ENCODE measurements at regions of chr12 and their contacts with region 1.

Region 1: DNA sequence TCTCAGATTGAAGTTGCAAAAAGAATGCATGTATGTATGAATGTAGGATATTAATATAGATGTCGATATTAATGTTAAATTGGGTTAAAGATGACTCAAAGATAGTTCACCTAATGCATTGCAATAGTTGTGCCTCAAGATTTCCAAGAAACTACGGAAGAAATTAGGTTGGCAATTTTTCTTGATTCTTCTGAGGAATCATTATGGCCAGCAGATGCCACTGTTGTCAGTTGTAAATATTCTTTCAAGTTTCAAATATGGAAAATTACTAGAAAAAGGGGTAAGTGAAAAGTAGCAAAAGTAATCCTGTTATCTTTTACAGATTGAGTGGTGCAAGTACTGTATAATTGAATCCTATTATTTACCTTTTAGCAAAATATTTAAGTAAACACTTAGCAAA is 202.1 kb downstream of the ADAMTS20 start:
- DNase-seq: peak; percentile 10
- ATAC-seq: no peak
- H3K4me3 ChIP-seq: no peak overlapping the region
- H3K27ac ChIP-seq: no peak overlapping the region
- H3K4me1 ChIP-seq: no peaks in the 10 kb centered on the region
- H3K27me3 ChIP-seq: no peaks in the 10 kb centered on the region
- CTCF ChIP-seq: peak; percentile 32 to 59 (median 44); a peak in 5 of 6 replicates
- POLR2A ChIP-seq: no peak
- RAD21 ChIP-seq: peak; percentile 66

Region 2: GRCh38 chr12:43099691-43100163 is 250.1 kb before region 1 on chr12:
- CTCF ChIA-PET with region 1: no interaction called
- POLR2A ChIA-PET with region 1: no interaction called
- RAD21 ChIA-PET with region 1: no interaction called
- intact Hi-C with region 1: no loop called
- DNase-seq: no peak
- ATAC-seq: no peak
- H3K4me3 ChIP-seq: no peak overlapping the region
- H3K27ac ChIP-seq: no peak overlapping the region
- H3K4me1 ChIP-seq: no peaks in the 10 kb centered on the region
- H3K27me3 ChIP-seq: no peaks in the 10 kb centered on the region
- CTCF ChIP-seq: no peak
- POLR2A ChIP-seq: no peak
- RAD21 ChIP-seq: no peak

Region 3: GRCh38 chr12:43179486-43179885 is 170.4 kb before region 1 on chr12:
- CTCF ChIA-PET with region 1: no interaction called
- POLR2A ChIA-PET with region 1: no interaction called
- RAD21 ChIA-PET with region 1: no interaction called
- intact Hi-C with region 1: no loop called
- DNase-seq: no peak
- ATAC-seq: no peak
- H3K4me3 ChIP-seq: no peak overlapping the region
- H3K27ac ChIP-seq: no peak overlapping the region
- H3K4me1 ChIP-seq: no peaks in the 10 kb centered on the region
- H3K27me3 ChIP-seq: no peaks in the 10 kb centered on the region
- CTCF ChIP-seq: no peak
- POLR2A ChIP-seq: no peak
- RAD21 ChIP-seq: no peak

Region 4: GRCh38 chr12:43501703-43502102 is 151.8 kb after region 1 on chr12:
- CTCF ChIA-PET with region 1: no interaction called
- POLR2A ChIA-PET with region 1: no interaction called
- RAD21 ChIA-PET with region 1: no interaction called
- intact Hi-C with region 1: loop called (anchors 5 kb)
- DNase-seq: peak; percentile 36
- ATAC-seq: no peak
- H3K4me3 ChIP-seq: no peak overlapping the region
- H3K27ac ChIP-seq: no peak overlapping the region
- H3K4me1 ChIP-seq: no peaks in the 10 kb centered on the region
- H3K27me3 ChIP-seq: no peaks in the 10 kb centered on the region
- CTCF ChIP-seq: peak; percentile 61 to 75 (median 65)
- POLR2A ChIP-seq: no peak
- RAD21 ChIP-seq: peak; percentile 72

Region 5: GRCh38 chr12:43728117-43728516 is 378.3 kb after region 1 on chr12:
- CTCF ChIA-PET with region 1: no interaction called
- POLR2A ChIA-PET with region 1: no interaction called
- RAD21 ChIA-PET with region 1: no interaction called
- intact Hi-C with region 1: loop called (anchors 5 kb)
- DNase-seq: no peak
- ATAC-seq: no peak
- H3K4me3 ChIP-seq: no peak overlapping the region
- H3K27ac ChIP-seq: no peak overlapping the region
- H3K4me1 ChIP-seq: no peaks in the 10 kb centered on the region
- H3K27me3 ChIP-seq: no peaks in the 10 kb centered on the region
- CTCF ChIP-seq: peak in 2 of 3 experiments; percentile 31 to 50; a peak in 3 of 6 replicates
- POLR2A ChIP-seq: no peak
- RAD21 ChIP-seq: peak; percentile 43